B cell (primary cell): ENCODE measurements at regions of chr14 and their contacts with region 1.

Region 1: GRCh38 chr14:50311975-50312733 is at the starts of genes DMAC2L and L2HGDH:
- DNase-seq: peak; percentile 95
- ATAC-seq: peak; percentile 93
- H3K4me3 ChIP-seq: peak within 1 kb of the TSS; percentile 73 to 81 (median 79)
- H3K4me3 Mint-ChIP-seq: peak within 1 kb of the TSS; percentile 97
- H3K27ac ChIP-seq: peak within 1 kb of the TSS; percentile 86
- H3K27ac Mint-ChIP-seq: peak within 1 kb of the TSS; percentile 98
- H3K4me1 ChIP-seq: peaks cover 13 to 16% of the 10 kb centered on the region in 2 donors
- H3K4me1 Mint-ChIP-seq: peaks cover 36% of the 10 kb centered on the region
- H3K27me3 ChIP-seq: no peaks in the 10 kb centered on the region
- H3K27me3 Mint-ChIP-seq: no peaks in the 10 kb centered on the region
- CTCF ChIP-seq: peak; percentile 42
- total RNA-seq, gene DMAC2L: 31.9 and 40.0 TPM in 2 replicates
- total RNA-seq, gene L2HGDH: 5.5 and 5.6 TPM in 2 replicates

Region 2: GRCh38 chr14:49620182-49621113 is 691.7 kb before region 1 on chr14 and contains the starts of genes MGAT2 and RPL36AL:
- CTCF ChIA-PET with region 1: no interaction called
- POLR2A ChIA-PET with region 1: no interaction called
- intact Hi-C with region 1: loop called (anchors 1 kb)
- DNase-seq: peak; percentile 98
- ATAC-seq: peak; percentile 93
- H3K4me3 ChIP-seq: peak within 1 kb of the TSS; percentile 90 to 99 (median 97)
- H3K4me3 Mint-ChIP-seq: peak within 1 kb of the TSS; percentile 99
- H3K27ac ChIP-seq: peak within 1 kb of the TSS; percentile 96 to 98
- H3K27ac Mint-ChIP-seq: peak within 1 kb of the TSS; percentile 99
- H3K4me1 ChIP-seq: peaks cover 31 to 44% of the 10 kb centered on the region in 2 donors
- H3K4me1 Mint-ChIP-seq: peaks cover 55% of the 10 kb centered on the region
- H3K27me3 ChIP-seq: no peaks in the 10 kb centered on the region
- H3K27me3 Mint-ChIP-seq: no peaks in the 10 kb centered on the region
- CTCF ChIP-seq: peak; percentile 43
- total RNA-seq, gene MGAT2: 36.2 and 39.9 TPM in 2 replicates
- total RNA-seq, gene RPL36AL: 151 and 171 TPM in 2 replicates

Region 3: GRCh38 chr14:49767562-49768300 is 544.4 kb before region 1 on chr14 and contains the start of gene KLHDC2:
- CTCF ChIA-PET with region 1: no interaction called
- POLR2A ChIA-PET with region 1: no interaction called
- intact Hi-C with region 1: loop called (anchors 5 kb)
- DNase-seq: peak; percentile 93
- ATAC-seq: peak; percentile 86
- H3K4me3 ChIP-seq: peak within 1 kb of the TSS; percentile 74 to 97 (median 76)
- H3K4me3 Mint-ChIP-seq: peak within 1 kb of the TSS; percentile 98
- H3K27ac ChIP-seq: peak within 1 kb of the TSS; percentile 91 to 97
- H3K27ac Mint-ChIP-seq: peak within 1 kb of the TSS; percentile 99
- H3K4me1 ChIP-seq: peaks cover 22 to 29% of the 10 kb centered on the region in 2 donors
- H3K4me1 Mint-ChIP-seq: peaks cover 31% of the 10 kb centered on the region
- H3K27me3 ChIP-seq: no peaks in the 10 kb centered on the region
- H3K27me3 Mint-ChIP-seq: no peaks in the 10 kb centered on the region
- CTCF ChIP-seq: peak; percentile 40
- total RNA-seq, gene KLHDC2: 60.5 and 65.3 TPM in 2 replicates

Region 4: DNA sequence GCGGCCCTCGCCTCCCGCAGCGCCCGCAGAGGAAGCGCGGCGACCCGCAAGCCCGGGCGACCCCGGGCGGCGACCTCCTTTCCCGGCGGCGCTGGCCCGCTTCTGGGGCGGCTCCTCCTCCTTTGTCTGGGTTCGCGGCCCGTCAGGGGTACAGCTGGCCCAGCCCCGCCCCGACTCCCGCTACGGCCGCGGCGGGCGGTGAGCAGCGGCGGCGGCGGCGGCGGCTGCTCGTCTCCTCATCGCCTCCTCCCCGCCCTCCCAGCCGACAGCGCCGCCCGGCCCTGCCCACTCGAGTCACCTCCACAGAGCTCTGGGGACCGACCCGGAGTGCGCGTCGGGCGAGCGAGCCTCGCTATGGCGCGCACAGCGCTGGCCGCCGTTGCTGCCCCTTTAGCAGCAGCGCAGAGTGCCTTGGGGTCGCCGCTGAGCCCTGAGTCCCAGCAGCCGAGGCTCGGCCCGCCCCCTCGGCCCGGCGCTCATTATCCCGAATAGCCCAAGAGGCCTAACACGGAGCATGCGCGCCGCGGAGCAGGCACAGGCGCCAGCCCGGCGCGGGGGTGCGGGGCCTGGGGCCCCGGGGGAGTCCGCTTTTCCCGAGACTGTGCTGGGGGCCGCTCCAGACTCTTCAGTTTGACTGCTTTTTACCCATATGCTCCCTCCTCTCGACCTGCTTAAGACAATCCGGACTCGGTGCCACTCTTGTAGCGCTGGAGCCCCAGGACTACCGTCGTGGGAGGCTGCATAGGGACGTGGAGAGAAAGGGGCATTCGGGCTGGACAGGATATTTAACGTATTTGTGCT is 80.5 kb before region 1 on chr14 and contains the start of gene SOS2:
- CTCF ChIA-PET with region 1: no interaction called
- POLR2A ChIA-PET with region 1: interaction called, 3 read pairs
- intact Hi-C with region 1: loop called (anchors 1 kb)
- DNase-seq: peak; percentile 93
- ATAC-seq: peak; percentile 88
- H3K4me3 ChIP-seq: peak within 1 kb of the TSS; percentile 76 to 94 (median 87)
- H3K4me3 Mint-ChIP-seq: peak within 1 kb of the TSS; percentile 95
- H3K27ac ChIP-seq: peak within 1 kb of the TSS; percentile 83 to 88
- H3K27ac Mint-ChIP-seq: peak within 1 kb of the TSS; percentile 97
- H3K4me1 ChIP-seq: peaks cover 14 to 17% of the 10 kb centered on the region in 2 donors
- H3K4me1 Mint-ChIP-seq: peaks cover 30% of the 10 kb centered on the region
- H3K27me3 ChIP-seq: no peaks in the 10 kb centered on the region
- H3K27me3 Mint-ChIP-seq: no peaks in the 10 kb centered on the region
- CTCF ChIP-seq: no peak
- total RNA-seq, gene SOS2: 51.0 and 55.3 TPM in 2 replicates

Region 5: DNA sequence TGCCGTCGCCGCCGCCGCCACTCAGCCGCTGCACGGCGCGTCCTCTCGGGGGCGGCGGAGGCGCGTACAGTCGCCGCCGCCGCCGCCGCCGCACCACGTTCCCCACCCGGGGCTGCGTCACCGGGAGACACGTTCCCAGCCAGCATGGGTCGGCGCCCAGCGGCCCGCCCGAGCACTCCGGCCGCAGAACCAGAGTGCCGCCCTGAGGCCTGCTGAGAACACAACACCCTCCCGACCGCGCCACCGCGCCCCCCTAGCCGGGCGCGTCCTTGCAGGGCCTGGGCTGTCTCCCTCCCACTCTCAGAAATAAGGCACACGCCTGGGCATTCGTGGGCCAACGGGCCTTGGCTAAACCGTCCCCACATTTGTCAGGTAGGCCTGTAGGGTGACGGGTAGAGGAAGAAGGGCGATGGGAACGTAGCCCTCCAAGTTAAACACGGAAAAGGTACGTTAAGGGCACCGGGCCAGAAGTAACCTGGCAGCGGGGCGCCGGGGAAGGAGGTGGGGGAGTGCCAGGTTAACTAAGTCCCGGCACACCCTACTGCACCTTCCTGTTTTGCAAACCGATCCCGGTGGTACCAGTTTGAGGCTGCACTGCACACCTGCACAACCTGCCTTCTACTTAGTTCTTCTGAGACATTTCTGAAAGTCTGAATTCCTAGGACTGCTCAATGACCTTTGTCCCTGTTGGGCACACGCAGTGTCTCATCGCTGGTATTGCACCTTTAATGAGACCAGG is 220.5 kb after region 1 on chr14 and contains the start of gene MAP4K5:
- CTCF ChIA-PET with region 1: interaction called, 9 read pairs
- POLR2A ChIA-PET with region 1: interaction called, 3 read pairs
- intact Hi-C with region 1: loop called (anchors 1 kb)
- DNase-seq: peak; percentile 94
- ATAC-seq: peak; percentile 91
- H3K4me3 ChIP-seq: peak within 1 kb of the TSS; percentile 62 to 89 (median 76)
- H3K4me3 Mint-ChIP-seq: peak within 1 kb of the TSS; percentile 93
- H3K27ac ChIP-seq: peak within 1 kb of the TSS; percentile 83 to 88
- H3K27ac Mint-ChIP-seq: peak within 1 kb of the TSS; percentile 95
- H3K4me1 ChIP-seq: peaks cover 18 to 37% of the 10 kb centered on the region in 2 donors
- H3K4me1 Mint-ChIP-seq: peaks cover 47% of the 10 kb centered on the region
- H3K27me3 ChIP-seq: no peaks in the 10 kb centered on the region
- H3K27me3 Mint-ChIP-seq: no peaks in the 10 kb centered on the region
- CTCF ChIP-seq: peak; percentile 79
- total RNA-seq, gene MAP4K5: 58.2 and 60.0 TPM in 2 replicates

Region 6: DNA sequence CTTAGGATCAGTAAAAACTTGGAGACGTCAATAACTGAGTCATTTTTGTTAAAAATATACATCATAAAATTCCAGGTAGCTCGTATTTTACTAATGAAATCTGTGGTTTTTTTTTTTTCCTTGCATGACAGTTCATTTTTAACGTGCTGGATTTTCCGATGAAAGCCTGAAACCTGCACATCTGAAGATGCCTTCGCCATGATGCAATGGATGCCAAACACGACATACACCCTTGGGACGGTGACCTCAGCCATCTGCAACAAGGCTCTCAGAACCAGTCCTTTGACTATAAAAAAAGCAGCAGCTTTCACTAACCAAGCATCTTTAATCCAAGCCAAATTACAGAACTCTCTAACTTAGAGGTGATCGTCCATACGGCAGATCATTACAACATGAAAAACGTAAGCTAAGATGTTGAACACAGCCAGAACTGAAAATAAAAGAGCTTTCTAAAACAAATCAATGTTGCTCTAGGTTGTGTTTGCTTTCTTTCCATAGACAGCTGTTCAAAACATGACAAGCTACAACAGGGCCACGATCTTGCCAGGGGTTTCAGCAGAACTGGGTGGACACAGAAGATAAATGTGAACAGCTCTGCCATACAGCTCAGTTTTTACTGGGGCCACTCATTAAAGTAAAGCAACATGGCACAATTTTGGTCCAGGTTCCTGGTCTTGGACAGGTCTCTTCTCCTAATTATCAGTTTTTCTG is 511.1 kb after region 1 on chr14:
- CTCF ChIA-PET with region 1: no interaction called
- POLR2A ChIA-PET with region 1: no interaction called
- intact Hi-C with region 1: loop called (anchors 10 kb)
- DNase-seq: peak; percentile 52
- ATAC-seq: peak; percentile 41
- H3K4me3 ChIP-seq: peak overlapping the region; percentile 23 to 60 (median 42)
- H3K4me3 Mint-ChIP-seq: peak overlapping the region; percentile 85
- H3K27ac ChIP-seq: peak overlapping the region; percentile 71 to 92
- H3K27ac Mint-ChIP-seq: peak overlapping the region; percentile 92
- H3K4me1 ChIP-seq: peaks cover 78 to 86% of the 10 kb centered on the region in 2 donors
- H3K4me1 Mint-ChIP-seq: peaks cover 91% of the 10 kb centered on the region
- H3K27me3 ChIP-seq: no peaks in the 10 kb centered on the region
- H3K27me3 Mint-ChIP-seq: no peaks in the 10 kb centered on the region
- CTCF ChIP-seq: no peak